ENCODE measurements at regions of chr15 and their contacts with region 1.

Region 1: DNA sequence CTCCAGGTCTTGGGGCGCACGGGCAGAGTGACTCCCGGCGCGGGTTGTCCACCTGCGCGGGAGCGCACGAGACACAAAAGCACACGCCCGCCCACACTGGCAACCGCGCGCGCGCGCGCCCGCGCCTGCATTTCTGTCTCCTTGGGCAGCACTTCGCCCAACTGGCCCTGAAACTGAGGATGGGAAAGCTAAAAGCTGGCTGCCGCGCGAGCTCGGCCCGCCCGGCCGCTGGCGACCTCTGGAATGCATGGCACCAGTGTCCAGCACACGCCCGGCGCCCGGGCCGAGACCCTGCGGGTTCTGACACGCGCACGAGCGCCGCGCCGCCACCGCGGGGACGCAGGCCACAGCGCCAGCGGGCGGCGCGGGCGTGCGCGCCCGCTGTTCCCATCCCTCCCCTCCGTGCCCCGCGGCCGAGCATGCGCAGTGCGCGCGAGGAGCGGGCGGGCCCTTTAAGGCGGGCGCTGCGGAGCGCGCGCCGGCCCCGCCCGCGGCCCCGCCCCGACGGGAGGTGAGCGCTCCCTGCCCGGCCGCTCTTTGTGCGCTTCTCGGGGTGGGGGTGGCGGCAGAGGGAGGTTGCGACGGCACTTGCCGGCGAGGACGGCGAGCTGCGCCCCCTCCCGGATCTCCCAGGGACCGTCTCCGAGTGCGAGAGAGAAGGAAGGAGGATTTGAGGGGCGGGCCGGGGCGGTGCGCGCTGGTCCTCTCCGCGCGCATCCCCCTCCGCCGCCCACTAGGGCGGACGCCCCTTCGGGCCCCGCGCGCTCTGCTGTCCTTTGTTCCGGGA is 1.0 kb upstream of the MEX3B start:
- DNase-seq: peak; percentile 70 to 93 (median 86)
- ATAC-seq: peak; percentile 81
- H3K4me3 ChIP-seq: peak overlapping the region; percentile 76 to 98
- H3K4me3 Mint-ChIP-seq: peak overlapping the region; percentile 89
- H3K27ac ChIP-seq: peak overlapping the region; percentile 65 to 70
- H3K27ac Mint-ChIP-seq: peak overlapping the region; percentile 77
- H3K4me1 ChIP-seq: peaks cover 19% of the 10 kb centered on the region
- H3K4me1 Mint-ChIP-seq: peaks cover 16% of the 10 kb centered on the region
- H3K27me3 ChIP-seq: peaks cover 0 to 7% of the 10 kb centered on the region in 2 experiments
- H3K27me3 Mint-ChIP-seq: peaks cover 3% of the 10 kb centered on the region
- CTCF ChIP-seq: peak; percentile 57

Region 2: GRCh38 chr15:81000624-81001151 is 1046.2 kb before region 1 on chr15 and contains the start of gene TLNRD1:
- CTCF ChIA-PET with region 1: no interaction called
- POLR2A ChIA-PET with region 1: no interaction called
- intact Hi-C with region 1: loop called (anchors 2 to 5 kb)
- DNase-seq: peak; percentile 49 to 93 (median 81)
- ATAC-seq: peak; percentile 59
- H3K4me3 ChIP-seq: peak within 1 kb of the TSS; percentile 74 to 78
- H3K4me3 Mint-ChIP-seq: peak within 1 kb of the TSS; percentile 96
- H3K27ac ChIP-seq: peak within 1 kb of the TSS; percentile 84 to 88
- H3K27ac Mint-ChIP-seq: peak within 1 kb of the TSS; percentile 98
- H3K4me1 ChIP-seq: peaks cover 42% of the 10 kb centered on the region
- H3K4me1 Mint-ChIP-seq: peaks cover 49% of the 10 kb centered on the region
- H3K27me3 ChIP-seq: no peaks in the 10 kb centered on the region
- H3K27me3 Mint-ChIP-seq: no peaks in the 10 kb centered on the region
- CTCF ChIP-seq: no peak
- total RNA-seq, gene TLNRD1: 15.3 to 15.6 TPM

Region 3: GRCh38 chr15:81323944-81324881 is 722.6 kb before region 1 on chr15 and contains the start of gene STARD5:
- CTCF ChIA-PET with region 1: no interaction called
- POLR2A ChIA-PET with region 1: no interaction called
- intact Hi-C with region 1: loop called in 1 of 2 experiments (anchors 10 kb)
- DNase-seq: peak; percentile 85 to 97 (median 96)
- ATAC-seq: peak; percentile 96
- H3K4me3 ChIP-seq: peak within 1 kb of the TSS; percentile 82 to 93
- H3K4me3 Mint-ChIP-seq: peak within 1 kb of the TSS; percentile 95
- H3K27ac ChIP-seq: peak within 1 kb of the TSS; percentile 54 to 60
- H3K27ac Mint-ChIP-seq: peak within 1 kb of the TSS; percentile 93
- H3K4me1 ChIP-seq: peaks cover 27% of the 10 kb centered on the region
- H3K4me1 Mint-ChIP-seq: peaks cover 41% of the 10 kb centered on the region
- H3K27me3 ChIP-seq: no peaks in the 10 kb centered on the region
- H3K27me3 Mint-ChIP-seq: no peaks in the 10 kb centered on the region
- CTCF ChIP-seq: no peak
- total RNA-seq, gene STARD5: 13.6 to 14.3 TPM

Region 4: GRCh38 chr15:81480645-81481053 is 566.2 kb before region 1 on chr15:
- CTCF ChIA-PET with region 1: interaction called, 4 read pairs
- POLR2A ChIA-PET with region 1: no interaction called
- intact Hi-C with region 1: loop called in 1 of 2 experiments (anchors 1 kb)
- DNase-seq: peak in 4 of 9 experiments; percentile 47 to 61 (median 54)
- ATAC-seq: peak; percentile 23
- H3K4me3 ChIP-seq: no peak overlapping the region
- H3K4me3 Mint-ChIP-seq: peak overlapping the region; percentile 42
- H3K27ac ChIP-seq: no peak overlapping the region
- H3K27ac Mint-ChIP-seq: no peak overlapping the region
- H3K4me1 ChIP-seq: no peaks in the 10 kb centered on the region
- H3K4me1 Mint-ChIP-seq: no peaks in the 10 kb centered on the region
- H3K27me3 ChIP-seq: no peaks in the 10 kb centered on the region
- H3K27me3 Mint-ChIP-seq: no peaks in the 10 kb centered on the region
- CTCF ChIP-seq: peak; percentile 86

Region 5: GRCh38 chr15:82262422-82263026 is 215.7 kb after region 1 on chr15 and contains the starts of genes EFL1 and SAXO2:
- CTCF ChIA-PET with region 1: no interaction called
- POLR2A ChIA-PET with region 1: no interaction called
- intact Hi-C with region 1: loop called in 1 of 2 experiments (anchors 10 kb)
- DNase-seq: peak; percentile 76 to 93 (median 88)
- ATAC-seq: peak; percentile 94
- H3K4me3 ChIP-seq: peak within 1 kb of the TSS; percentile 59 to 72
- H3K4me3 Mint-ChIP-seq: peak within 1 kb of the TSS; percentile 93
- H3K27ac ChIP-seq: peak within 1 kb of the TSS; percentile 40 to 58
- H3K27ac Mint-ChIP-seq: peak within 1 kb of the TSS; percentile 88
- H3K4me1 ChIP-seq: peaks cover 24% of the 10 kb centered on the region
- H3K4me1 Mint-ChIP-seq: peaks cover 35% of the 10 kb centered on the region
- H3K27me3 ChIP-seq: no peaks in the 10 kb centered on the region
- H3K27me3 Mint-ChIP-seq: no peaks in the 10 kb centered on the region
- CTCF ChIP-seq: no peak
- total RNA-seq, gene EFL1: 5.0 to 9.5 TPM
- total RNA-seq, gene SAXO2: 2.6 to 2.9 TPM